ENCODE measurements at regions of chr2 and their contacts with region 1.

Region 1: GRCh38 chr2:231198291-231199173 is at the start of gene ARMC9:
- DNase-seq: peak; percentile 90 to 95 (median 91)
- H3K4me3 ChIP-seq: peak within 1 kb of the TSS; percentile 93 to 100 (median 100)
- H3K27ac ChIP-seq: peak within 1 kb of the TSS in 1 of 2 donors; percentile 67
- H3K4me1 ChIP-seq: peaks cover 0 to 6% (median 5%) of the 10 kb centered on the region in 3 donors
- H3K27me3 ChIP-seq: no peaks in the 10 kb centered on the region
- CTCF ChIP-seq: no peak
- total RNA-seq, gene ARMC9: 18.2 TPM

Region 2: DNA sequence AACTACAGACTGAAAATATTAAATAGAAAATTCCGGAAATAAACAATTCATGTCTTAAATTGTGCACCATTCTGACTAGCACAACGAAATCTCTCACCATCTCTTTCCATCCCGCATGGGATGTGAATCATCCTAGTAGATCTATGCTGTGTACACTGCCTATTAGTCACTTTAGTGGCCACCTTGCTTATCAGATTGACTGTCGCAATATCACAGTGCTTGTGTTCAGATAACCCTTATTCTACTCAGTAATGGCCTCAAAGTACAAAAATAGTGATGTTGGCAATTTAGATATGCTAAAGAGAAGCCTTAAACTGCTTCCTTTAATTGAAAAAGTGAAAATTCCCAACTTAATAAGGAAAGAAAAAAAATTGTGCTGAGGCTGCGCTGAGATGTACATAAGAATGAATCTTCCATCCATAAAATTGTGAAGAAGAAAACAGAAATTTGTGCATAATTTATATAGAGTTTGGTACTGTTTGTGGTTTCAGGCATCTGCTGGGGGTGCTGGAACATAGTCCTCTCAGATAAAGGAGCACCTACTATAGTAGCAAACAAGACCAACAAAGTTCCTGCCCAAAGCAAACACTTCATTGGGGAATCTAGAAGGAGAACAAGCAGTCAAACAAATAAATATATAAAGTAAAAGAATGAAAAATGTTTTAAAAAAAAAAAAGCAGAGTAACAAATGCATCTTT is 129.9 kb before region 1 on chr2:
- intact Hi-C with region 1: no loop called
- DNase-seq: no peak
- H3K4me3 ChIP-seq: no peak overlapping the region
- H3K27ac ChIP-seq: no peak overlapping the region
- H3K4me1 ChIP-seq: no peaks in the 10 kb centered on the region
- H3K27me3 ChIP-seq: no peaks in the 10 kb centered on the region
- CTCF ChIP-seq: no peak

Region 3: DNA sequence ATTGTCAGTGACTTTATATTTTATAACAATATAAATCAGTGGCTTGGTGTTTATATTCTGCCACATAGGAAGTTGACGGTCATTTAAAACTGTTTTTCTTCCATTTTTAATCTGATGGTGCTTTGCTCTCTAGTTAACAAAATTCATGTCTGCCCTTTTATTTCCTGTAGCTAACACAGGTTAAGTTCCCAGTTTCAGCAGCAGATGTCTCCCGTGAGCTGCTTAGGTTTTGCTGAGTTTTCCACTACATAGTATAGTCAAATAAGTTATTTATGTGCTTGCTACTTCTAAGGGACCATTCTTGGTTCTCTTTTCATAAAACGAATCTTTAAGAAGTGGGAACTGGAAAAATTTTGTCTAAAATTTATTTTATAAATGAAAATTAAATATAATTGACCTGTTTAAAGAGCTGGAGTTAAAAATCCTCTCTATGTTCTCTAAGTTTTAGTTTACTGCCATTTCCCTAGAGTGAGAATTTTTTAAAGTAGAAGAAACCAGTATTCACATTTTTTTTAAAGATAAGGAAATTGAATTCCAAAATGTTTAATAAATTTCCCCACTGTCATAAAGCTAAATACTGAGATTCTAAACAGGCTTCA is 94.3 kb before region 1 on chr2:
- intact Hi-C with region 1: loop called (anchors 10 kb)
- DNase-seq: peak in 4 of 5 donors; percentile 64 to 88 (median 82)
- H3K4me3 ChIP-seq: no peak overlapping the region
- H3K27ac ChIP-seq: no peak overlapping the region
- H3K4me1 ChIP-seq: no peaks in the 10 kb centered on the region
- H3K27me3 ChIP-seq: no peaks in the 10 kb centered on the region
- CTCF ChIP-seq: peak; percentile 87

Region 4: DNA sequence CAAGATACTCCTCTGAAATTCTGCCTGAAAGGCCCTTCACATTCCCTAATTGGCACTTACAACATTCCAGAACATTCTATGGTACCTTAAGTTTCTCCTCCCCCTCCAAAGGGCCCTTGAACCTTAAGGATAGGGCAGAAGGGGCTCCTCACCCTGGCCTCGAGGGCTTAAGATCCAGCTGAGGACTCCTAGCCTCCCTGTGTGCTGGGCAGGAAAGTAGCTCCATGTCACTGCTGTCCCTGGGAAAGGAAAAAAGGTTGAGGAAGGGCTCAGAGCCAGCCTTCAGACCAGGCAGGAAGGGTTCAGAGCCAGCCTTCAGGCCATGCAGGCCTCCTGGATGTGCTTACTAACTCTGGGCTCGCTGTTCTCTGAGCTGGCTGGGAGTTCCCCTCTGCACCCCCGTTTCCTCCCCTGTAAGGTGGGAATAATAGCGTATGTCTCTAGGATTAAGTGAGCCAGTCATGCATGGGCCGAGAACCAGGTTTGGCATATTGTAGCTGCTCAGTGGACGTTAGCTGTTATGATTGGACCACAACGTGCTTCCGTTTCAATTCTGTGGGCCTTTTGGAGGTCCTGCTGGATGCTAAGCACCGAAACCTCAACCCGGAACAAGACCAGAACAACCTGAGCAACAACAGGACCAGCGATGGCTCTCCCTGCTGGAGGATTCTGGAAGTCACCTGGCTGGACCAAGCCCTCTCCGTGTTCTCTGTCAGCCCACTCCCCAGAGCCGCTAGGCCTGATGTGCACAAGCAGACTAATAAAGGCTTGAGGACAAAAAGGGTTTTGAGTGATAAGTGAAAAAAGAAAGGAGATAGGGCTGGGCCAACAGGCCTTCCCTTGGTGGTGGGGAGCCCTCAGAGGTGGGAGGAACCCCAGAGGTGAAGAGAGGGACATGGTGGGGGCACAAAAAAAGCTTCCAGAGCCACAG is 195.9 kb after region 1 on chr2:
- intact Hi-C with region 1: no loop called
- DNase-seq: peak in 2 of 5 donors; percentile 45 to 55
- H3K4me3 ChIP-seq: no peak overlapping the region
- H3K27ac ChIP-seq: no peak overlapping the region
- H3K4me1 ChIP-seq: peaks cover 0 to 2% (median 0%) of the 10 kb centered on the region in 3 donors
- H3K27me3 ChIP-seq: no peaks in the 10 kb centered on the region
- CTCF ChIP-seq: no peak

Measured in kidney (tissue), 22 donors.